Activated T-helper 1 cell treated with anti-CD3 and anti-CD28 coated beads, Interleukin-12 subunit alpha, Interleukin-12 subunit beta, Interleukin-2, Interleukin-4 antibody, amounts not matched to agents 30 ng/mL and 10 ng/mL and 1 ng/mL, durations not matched to agents 14 hours and 24 hours and 36 hours (primary cell): ENCODE measurements at regions of chr12 and their contacts with region 1.

Region 1: DNA sequence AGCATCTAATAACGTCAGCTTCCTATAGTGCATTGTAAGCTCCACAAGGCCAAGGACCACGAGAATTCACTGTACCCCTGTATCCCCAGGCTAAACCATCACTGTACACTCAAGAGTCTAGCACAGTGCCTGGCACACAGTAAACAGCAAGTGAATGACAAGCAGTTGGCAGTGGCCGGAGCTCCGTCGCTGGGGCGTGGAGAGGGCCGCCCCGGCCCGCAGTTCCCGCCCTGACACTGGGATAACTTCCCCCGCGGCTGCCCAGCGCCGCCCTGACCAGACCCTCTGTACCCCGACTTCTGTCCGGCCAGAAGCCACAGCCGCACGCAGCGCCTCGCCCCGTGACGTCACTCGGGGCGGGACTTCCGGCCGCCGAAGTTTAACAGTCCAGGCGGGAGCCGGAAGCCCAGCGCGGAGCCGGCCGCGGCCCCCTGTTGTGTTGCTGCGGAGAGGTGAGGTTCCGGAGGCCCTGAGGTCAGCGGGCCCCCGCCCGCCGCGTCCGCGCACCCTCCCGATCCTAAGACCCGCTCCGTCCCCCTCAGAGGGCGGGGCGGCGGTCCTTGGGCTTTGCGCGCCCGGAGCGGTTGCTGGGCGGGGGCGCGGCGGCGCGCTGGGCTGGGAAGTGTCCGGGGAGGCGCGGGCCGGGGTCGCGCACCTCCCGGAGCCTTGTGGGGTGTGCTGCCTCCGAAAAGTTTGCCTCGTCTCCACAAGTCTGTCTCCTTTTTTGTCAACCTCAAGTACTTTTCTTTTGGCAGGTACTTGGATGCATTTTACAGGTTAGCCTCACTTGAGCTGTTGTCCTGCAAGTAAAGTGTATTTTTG is at the start of gene NEDD1:
- DNase-seq: peak; percentile 83
- H3K4me3 Mint-ChIP-seq: peak within 1 kb of the TSS; percentile 88
- H3K27ac Mint-ChIP-seq: peak within 1 kb of the TSS; percentile 97
- H3K4me1 Mint-ChIP-seq: peaks cover 51% of the 10 kb centered on the region
- H3K27me3 Mint-ChIP-seq: peaks cover 3% of the 10 kb centered on the region
- total RNA-seq, gene NEDD1: 61.1 and 65.3 TPM in 2 replicates

Region 2: GRCh38 chr12:95473884-95474659 is 1433.0 kb before region 1 on chr12 and contains the start of gene METAP2:
- intact Hi-C with region 1: loop called (anchors 10 kb)
- DNase-seq: peak; percentile 86
- H3K4me3 Mint-ChIP-seq: peak within 1 kb of the TSS; percentile 100
- H3K27ac Mint-ChIP-seq: peak within 1 kb of the TSS; percentile 100
- H3K4me1 Mint-ChIP-seq: peaks cover 46% of the 10 kb centered on the region
- H3K27me3 Mint-ChIP-seq: no peaks in the 10 kb centered on the region
- total RNA-seq, gene METAP2: 118 and 121 TPM in 2 replicates

Region 3: GRCh38 chr12:96194971-96195844 is 711.9 kb before region 1 on chr12:
- intact Hi-C with region 1: loop called (anchors 10 kb)
- DNase-seq: peak; percentile 68
- H3K4me3 Mint-ChIP-seq: peak overlapping the region; percentile 96
- H3K27ac Mint-ChIP-seq: peak overlapping the region; percentile 98
- H3K4me1 Mint-ChIP-seq: peaks cover 49% of the 10 kb centered on the region
- H3K27me3 Mint-ChIP-seq: no peaks in the 10 kb centered on the region

Region 4: GRCh38 chr12:96571101-96571862 is 335.8 kb before region 1 on chr12:
- intact Hi-C with region 1: loop called (anchors 2 kb)
- DNase-seq: no peak
- H3K4me3 Mint-ChIP-seq: peak overlapping the region; percentile 15
- H3K27ac Mint-ChIP-seq: peak overlapping the region; percentile 40
- H3K4me1 Mint-ChIP-seq: peaks cover 14% of the 10 kb centered on the region
- H3K27me3 Mint-ChIP-seq: no peaks in the 10 kb centered on the region

Region 5: DNA sequence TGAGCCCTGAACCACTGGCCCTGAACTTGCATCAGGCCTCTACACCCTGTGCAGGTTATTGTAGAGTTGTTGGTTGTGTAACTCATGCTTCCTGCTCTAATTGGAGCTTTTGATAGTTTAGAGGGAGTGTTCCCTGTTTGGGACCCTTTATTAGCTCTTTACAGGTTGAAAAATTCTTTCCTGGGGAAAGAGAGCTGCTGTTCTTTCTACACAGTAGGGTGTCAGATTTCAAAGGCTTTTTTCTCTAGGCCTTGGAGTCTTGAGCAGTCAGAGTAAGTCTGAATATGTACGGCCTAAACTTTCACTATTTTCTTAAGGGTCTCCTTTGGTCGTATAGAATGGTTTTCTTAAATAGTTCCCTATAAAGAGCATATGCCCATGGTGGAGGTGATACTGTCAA is 60.8 kb before region 1 on chr12:
- intact Hi-C with region 1: no loop called
- DNase-seq: no peak
- H3K4me3 Mint-ChIP-seq: no peak overlapping the region
- H3K27ac Mint-ChIP-seq: no peak overlapping the region
- H3K4me1 Mint-ChIP-seq: no peaks in the 10 kb centered on the region
- H3K27me3 Mint-ChIP-seq: peaks cover 6% of the 10 kb centered on the region

Region 6: GRCh38 chr12:96886998-96887677 is 19.9 kb before region 1 on chr12:
- intact Hi-C with region 1: no loop called
- DNase-seq: no peak
- H3K4me3 Mint-ChIP-seq: no peak overlapping the region
- H3K27ac Mint-ChIP-seq: no peak overlapping the region
- H3K4me1 Mint-ChIP-seq: peaks cover 5% of the 10 kb centered on the region
- H3K27me3 Mint-ChIP-seq: peaks cover 7% of the 10 kb centered on the region

Region 7: DNA sequence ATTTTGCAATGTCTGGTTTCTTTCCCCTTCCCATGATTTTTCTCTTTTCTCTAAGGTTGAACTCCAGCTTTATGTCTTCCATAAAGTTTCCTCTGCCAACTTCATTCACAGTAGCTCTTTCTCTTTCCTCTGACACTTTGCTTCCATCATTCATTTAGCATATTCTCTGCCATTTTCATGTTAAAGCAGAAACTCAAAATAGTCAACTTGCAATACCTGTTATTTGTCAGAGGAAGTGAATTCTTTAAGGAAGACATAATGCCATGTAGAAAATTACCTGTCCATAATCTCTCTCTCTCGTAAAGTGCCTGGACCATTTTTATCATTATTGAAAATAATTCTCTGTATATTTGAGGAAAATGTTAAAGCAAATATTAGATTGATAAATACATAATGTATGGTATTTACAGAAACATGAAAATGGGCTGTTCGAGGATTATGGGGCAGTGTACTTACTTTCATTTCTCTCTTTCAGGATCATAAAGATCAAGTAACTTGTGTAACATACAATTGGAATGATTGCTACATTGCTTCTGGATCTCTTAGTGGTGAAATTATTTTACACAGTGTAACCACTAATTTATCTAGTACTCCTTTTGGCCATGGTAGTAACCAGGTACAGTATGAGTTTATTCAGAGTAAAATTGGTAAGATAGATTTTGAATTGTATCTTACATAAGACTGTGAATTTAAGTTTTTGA is 12.6 kb after region 1 on chr12:
- intact Hi-C with region 1: loop called (anchors 1 kb)
- DNase-seq: no peak
- H3K4me3 Mint-ChIP-seq: no peak overlapping the region
- H3K27ac Mint-ChIP-seq: peak overlapping the region; percentile 65
- H3K4me1 Mint-ChIP-seq: peaks cover 37% of the 10 kb centered on the region
- H3K27me3 Mint-ChIP-seq: no peaks in the 10 kb centered on the region

Region 8: GRCh38 chr12:97131220-97131981 is 224.3 kb after region 1 on chr12:
- intact Hi-C with region 1: no loop called
- DNase-seq: no peak
- H3K4me3 Mint-ChIP-seq: no peak overlapping the region
- H3K27ac Mint-ChIP-seq: no peak overlapping the region
- H3K4me1 Mint-ChIP-seq: no peaks in the 10 kb centered on the region
- H3K27me3 Mint-ChIP-seq: no peaks in the 10 kb centered on the region

Region 9: GRCh38 chr12:97177481-97177880 is 270.4 kb after region 1 on chr12:
- intact Hi-C with region 1: no loop called
- DNase-seq: no peak
- H3K4me3 Mint-ChIP-seq: no peak overlapping the region
- H3K27ac Mint-ChIP-seq: no peak overlapping the region
- H3K4me1 Mint-ChIP-seq: no peaks in the 10 kb centered on the region
- H3K27me3 Mint-ChIP-seq: peaks cover 1% of the 10 kb centered on the region

Region 10: DNA sequence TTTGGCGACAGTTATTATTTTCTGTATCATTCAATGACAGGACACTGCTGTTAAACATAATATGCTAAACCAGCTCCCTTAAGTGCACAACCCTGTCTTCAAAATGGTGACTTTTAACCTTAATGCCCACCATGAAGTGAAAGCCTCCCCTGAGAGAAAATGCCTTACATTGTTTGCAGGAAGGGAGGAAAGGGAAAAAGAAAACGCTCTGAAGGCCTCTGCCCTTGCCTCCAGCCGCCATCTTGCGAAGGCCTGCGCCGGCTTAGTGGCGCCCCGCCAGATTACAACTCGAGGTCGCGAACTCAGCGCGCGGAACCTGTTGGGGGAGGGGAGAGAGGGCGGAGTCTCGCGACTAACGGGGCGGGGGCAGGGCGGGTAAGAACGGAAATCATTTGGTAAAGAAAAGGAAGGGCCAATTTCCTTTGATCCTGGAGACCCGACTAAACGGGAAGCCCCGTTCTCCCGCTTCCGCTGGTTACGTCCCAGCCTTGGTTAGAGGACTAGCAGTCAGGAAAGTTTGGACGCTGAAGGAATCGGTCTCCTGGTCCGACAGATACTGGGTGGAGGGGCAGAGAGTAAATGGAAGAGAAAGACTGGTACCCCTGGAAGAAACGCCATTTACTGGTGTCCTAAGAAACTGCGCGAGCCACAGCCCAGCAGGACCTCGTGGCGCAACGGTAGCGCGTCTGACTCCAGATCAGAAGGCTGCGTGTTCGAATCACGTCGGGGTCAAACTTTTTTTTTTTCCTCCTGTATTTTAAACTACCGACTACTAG is 1596.7 kb after region 1 on chr12:
- intact Hi-C with region 1: loop called (anchors 5 kb)
- DNase-seq: peak; percentile 90
- H3K4me3 Mint-ChIP-seq: peak overlapping the region; percentile 91
- H3K27ac Mint-ChIP-seq: peak overlapping the region; percentile 99
- H3K4me1 Mint-ChIP-seq: peaks cover 27% of the 10 kb centered on the region
- H3K27me3 Mint-ChIP-seq: peaks cover 8% of the 10 kb centered on the region